Aorta (tissue), 5 donors: ENCODE measurements at regions of chr7 and their contacts with region 1.

Region 1: DNA sequence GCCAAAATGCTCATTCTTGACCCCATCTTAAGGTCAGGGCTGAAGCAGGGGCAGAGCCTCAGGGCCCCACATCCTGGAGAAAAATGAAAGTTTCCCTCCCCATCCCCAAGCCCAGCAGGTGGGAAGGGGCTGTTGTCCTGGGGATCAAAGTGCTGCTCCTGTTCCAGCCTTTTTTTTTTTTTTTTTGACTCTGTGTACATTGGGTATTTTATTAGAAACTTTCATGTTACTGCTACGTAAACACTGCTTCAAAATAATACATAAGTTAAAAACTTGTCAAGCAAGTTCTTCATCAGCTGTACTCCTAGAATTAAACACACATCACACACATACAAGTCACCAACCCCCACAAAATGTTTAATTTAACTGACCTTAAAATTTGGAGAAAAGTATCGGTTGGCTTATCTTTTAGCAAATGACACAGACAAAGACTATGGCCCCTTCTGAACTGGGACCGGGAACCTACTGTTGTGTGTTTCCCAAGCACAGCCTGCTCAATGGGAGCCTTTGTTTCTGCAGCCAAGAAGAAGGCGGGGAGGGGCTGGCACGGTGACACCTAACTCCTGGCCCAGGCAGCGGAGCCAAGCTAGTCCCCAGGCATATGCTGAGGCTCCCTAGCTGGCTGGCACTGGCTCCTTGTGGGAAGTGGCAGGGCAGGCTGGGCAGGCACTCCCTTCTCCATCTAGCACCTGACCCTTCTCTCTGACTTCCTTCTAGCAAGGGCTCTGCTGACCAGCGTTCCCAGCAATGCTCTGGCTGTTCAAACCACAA is 325.2 kb downstream of the PLXNA4 start:
- DNase-seq: peak; percentile 86 to 88
- ATAC-seq: peak; percentile 73
- H3K4me3 ChIP-seq: no peak overlapping the region
- H3K27ac ChIP-seq: no peak overlapping the region
- H3K4me1 ChIP-seq: peaks cover 2% of the 10 kb centered on the region in 2 donors
- H3K27me3 ChIP-seq: no peaks in the 10 kb centered on the region

Region 2: GRCh38 chr7:132292803-132293202 is 41.7 kb after region 1 on chr7:
- intact Hi-C with region 1: loop called in 1 of 2 experiments (anchors 5 kb)
- DNase-seq: no peak
- ATAC-seq: no peak
- H3K4me3 ChIP-seq: no peak overlapping the region
- H3K27ac ChIP-seq: no peak overlapping the region
- H3K4me1 ChIP-seq: no peaks in the 10 kb centered on the region
- H3K27me3 ChIP-seq: no peaks in the 10 kb centered on the region

Region 3: DNA sequence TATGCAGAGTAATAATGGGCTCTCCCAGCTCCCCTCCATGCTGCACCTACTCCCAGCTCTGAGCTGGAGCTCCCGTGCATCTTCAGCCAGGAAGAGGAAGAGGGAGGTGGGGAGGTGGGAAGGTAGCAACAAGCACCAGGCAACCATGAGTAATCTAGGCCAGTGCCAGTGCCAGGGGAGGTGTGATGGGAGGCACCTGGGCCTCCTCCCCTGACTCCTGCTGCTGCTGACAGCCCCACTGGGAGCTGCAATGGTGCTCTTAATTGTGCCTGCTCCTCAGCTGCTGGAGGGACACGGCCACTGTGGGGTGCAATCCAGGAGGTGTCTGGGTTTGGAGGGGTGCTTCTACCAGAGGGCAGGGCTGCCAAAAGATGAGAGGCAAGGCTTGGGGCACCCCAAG is 82.2 kb after region 1 on chr7:
- intact Hi-C with region 1: no loop called
- DNase-seq: no peak
- ATAC-seq: no peak
- H3K4me3 ChIP-seq: no peak overlapping the region
- H3K27ac ChIP-seq: no peak overlapping the region
- H3K4me1 ChIP-seq: peaks cover 2 to 7% of the 10 kb centered on the region in 2 donors
- H3K27me3 ChIP-seq: no peaks in the 10 kb centered on the region

Region 4: GRCh38 chr7:132394283-132395198 is 143.5 kb after region 1 on chr7:
- intact Hi-C with region 1: no loop called
- DNase-seq: no peak
- ATAC-seq: peak; percentile 17
- H3K4me3 ChIP-seq: no peak overlapping the region
- H3K27ac ChIP-seq: no peak overlapping the region
- H3K4me1 ChIP-seq: peaks cover 0 to 5% of the 10 kb centered on the region in 2 donors
- H3K27me3 ChIP-seq: no peaks in the 10 kb centered on the region